A673 (cell line): ENCODE measurements at regions of chr22 and their contacts with region 1.

Region 1: GRCh38 chr22:42114721-42115120 is 15.9 kb downstream of the CYP2D6 start:
- DNase-seq: peak; percentile 50
- H3K4me3 ChIP-seq: no peak overlapping the region
- H3K27ac ChIP-seq: no peak overlapping the region
- H3K4me1 ChIP-seq: peaks cover 9% of the 10 kb centered on the region
- H3K27me3 ChIP-seq: no peaks in the 10 kb centered on the region
- CTCF ChIP-seq: peak; percentile 48

Region 2: DNA sequence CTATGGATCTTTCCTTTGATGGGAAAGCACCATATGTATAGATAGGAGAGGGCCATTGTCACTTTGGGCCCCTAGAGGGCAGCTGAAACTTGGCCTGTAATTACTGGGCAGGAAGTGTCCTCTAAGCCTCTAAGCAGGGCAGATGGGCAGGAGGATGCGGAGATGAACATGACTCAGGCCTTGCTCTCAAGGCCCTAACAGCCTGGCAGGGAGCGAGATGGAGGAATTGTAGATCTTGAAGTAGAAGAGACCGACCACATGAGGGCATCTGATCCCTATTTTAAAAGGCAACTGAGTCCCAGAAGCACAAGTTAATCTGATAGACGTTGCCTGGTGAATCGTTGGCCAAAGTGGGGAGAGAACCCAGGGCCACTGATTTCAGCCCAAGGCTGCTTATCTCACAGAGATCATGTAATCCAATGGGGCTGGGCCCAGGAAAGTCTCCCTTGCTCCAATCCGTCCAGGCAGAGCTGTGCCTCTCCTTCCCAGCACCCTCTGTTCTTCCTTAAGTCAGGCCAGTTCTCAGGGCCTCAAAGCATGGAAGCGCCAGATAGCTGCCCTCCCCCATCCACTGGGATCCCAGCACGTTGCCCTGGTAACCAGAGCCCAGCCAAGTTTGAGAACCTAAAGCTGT is 148.0 kb before region 1 on chr22:
- CTCF ChIA-PET with region 1: interaction called, 10 read pairs
- POLR2A ChIA-PET with region 1: no interaction called
- intact Hi-C with region 1: loop called (anchors 2 kb)
- DNase-seq: peak; percentile 79
- H3K4me3 ChIP-seq: no peak overlapping the region
- H3K27ac ChIP-seq: no peak overlapping the region
- H3K4me1 ChIP-seq: peaks cover 12% of the 10 kb centered on the region
- H3K27me3 ChIP-seq: no peaks in the 10 kb centered on the region
- CTCF ChIP-seq: peak; percentile 60